ENCODE measurements at regions of chr1 and their contacts with region 1.

Region 1: GRCh38 chr1:110766025-110766647 is 91.4 kb upstream of the KCNA3 start:
- DNase-seq: peak; percentile 18
- H3K4me3 ChIP-seq: no peak overlapping the region
- H3K27ac ChIP-seq: no peak overlapping the region
- H3K27me3 ChIP-seq: no peaks in the 10 kb centered on the region
- CTCF ChIP-seq: peak; percentile 81

Region 2: GRCh38 chr1:110524311-110525251 is 241.6 kb before region 1 on chr1:
- CTCF ChIA-PET with region 1: interaction called, 17 read pairs
- POLR2A ChIA-PET with region 1: no interaction called
- DNase-seq: no peak
- H3K4me3 ChIP-seq: no peak overlapping the region
- H3K27ac ChIP-seq: no peak overlapping the region
- H3K27me3 ChIP-seq: peaks cover 4% of the 10 kb centered on the region
- CTCF ChIP-seq: peak; percentile 55

Region 3: GRCh38 chr1:110619412-110620249 is 146.5 kb before region 1 on chr1:
- CTCF ChIA-PET with region 1: interaction called, 25 read pairs
- POLR2A ChIA-PET with region 1: no interaction called
- DNase-seq: peak; percentile 8
- H3K4me3 ChIP-seq: no peak overlapping the region
- H3K27ac ChIP-seq: no peak overlapping the region
- H3K27me3 ChIP-seq: peaks cover 2% of the 10 kb centered on the region
- CTCF ChIP-seq: peak; percentile 84

Region 4: GRCh38 chr1:110630839-110631663 is 135.1 kb before region 1 on chr1:
- CTCF ChIA-PET with region 1: interaction called, 52 read pairs
- POLR2A ChIA-PET with region 1: no interaction called
- DNase-seq: no peak
- H3K4me3 ChIP-seq: no peak overlapping the region
- H3K27ac ChIP-seq: no peak overlapping the region
- H3K27me3 ChIP-seq: peaks cover 6% of the 10 kb centered on the region
- CTCF ChIP-seq: peak; percentile 80

Region 5: DNA sequence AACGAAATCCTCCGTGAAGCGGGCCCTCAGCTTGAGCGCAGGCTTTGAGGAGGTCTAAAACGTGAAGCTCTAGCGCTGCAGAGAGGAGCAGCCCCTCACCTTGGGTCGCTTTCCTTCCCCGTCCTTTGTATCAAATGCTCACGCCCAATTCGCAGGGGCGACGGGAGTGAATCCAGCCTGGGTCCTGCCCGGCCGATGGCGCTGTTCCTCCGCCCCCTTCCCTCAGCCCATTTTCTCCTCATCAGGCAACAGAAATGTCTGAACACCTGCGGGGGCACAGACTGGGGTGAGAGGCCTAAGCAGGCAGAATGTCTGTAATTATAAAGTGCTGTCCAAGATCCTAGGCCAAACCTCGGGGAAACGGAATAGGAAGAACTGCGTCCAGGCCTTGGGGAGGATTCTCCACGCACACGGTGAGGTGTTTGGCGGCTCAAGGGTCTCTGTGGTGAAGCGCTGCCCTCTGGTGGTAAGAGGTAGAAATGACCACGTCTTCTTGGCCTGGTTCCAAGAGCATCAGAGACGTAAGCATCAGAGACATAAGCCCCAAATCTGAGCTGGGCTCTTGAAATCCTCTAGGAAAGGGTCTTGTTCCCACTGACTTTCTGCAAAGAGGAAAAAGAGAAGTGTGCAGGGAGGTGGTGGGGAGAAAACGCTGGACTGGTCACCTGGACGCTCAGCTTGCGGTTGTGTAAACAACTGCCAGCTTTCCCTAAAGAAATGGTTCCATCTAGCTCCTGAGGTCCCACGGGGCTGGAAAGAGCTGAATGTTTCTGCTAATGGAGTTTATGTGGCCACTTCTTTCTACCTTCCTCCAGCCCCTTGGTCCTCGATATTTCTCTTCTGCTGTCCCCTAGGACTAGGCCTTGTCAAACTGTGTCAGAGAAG is 14.7 kb after region 1 on chr1:
- CTCF ChIA-PET with region 1: interaction called, 44 read pairs
- POLR2A ChIA-PET with region 1: no interaction called
- DNase-seq: peak; percentile 20
- H3K4me3 ChIP-seq: no peak overlapping the region
- H3K27ac ChIP-seq: no peak overlapping the region
- H3K27me3 ChIP-seq: peaks cover 3% of the 10 kb centered on the region
- CTCF ChIP-seq: peak; percentile 71

Region 6: GRCh38 chr1:110787328-110788071 is 21.4 kb after region 1 on chr1:
- CTCF ChIA-PET with region 1: interaction called, 44 read pairs
- POLR2A ChIA-PET with region 1: no interaction called
- DNase-seq: no peak
- H3K4me3 ChIP-seq: no peak overlapping the region
- H3K27ac ChIP-seq: no peak overlapping the region
- H3K27me3 ChIP-seq: no peaks in the 10 kb centered on the region
- CTCF ChIP-seq: no peak

Measured in AG04450 (cell line).